ENCODE measurements at regions of chr6 and their contacts with region 1.

Region 1: DNA sequence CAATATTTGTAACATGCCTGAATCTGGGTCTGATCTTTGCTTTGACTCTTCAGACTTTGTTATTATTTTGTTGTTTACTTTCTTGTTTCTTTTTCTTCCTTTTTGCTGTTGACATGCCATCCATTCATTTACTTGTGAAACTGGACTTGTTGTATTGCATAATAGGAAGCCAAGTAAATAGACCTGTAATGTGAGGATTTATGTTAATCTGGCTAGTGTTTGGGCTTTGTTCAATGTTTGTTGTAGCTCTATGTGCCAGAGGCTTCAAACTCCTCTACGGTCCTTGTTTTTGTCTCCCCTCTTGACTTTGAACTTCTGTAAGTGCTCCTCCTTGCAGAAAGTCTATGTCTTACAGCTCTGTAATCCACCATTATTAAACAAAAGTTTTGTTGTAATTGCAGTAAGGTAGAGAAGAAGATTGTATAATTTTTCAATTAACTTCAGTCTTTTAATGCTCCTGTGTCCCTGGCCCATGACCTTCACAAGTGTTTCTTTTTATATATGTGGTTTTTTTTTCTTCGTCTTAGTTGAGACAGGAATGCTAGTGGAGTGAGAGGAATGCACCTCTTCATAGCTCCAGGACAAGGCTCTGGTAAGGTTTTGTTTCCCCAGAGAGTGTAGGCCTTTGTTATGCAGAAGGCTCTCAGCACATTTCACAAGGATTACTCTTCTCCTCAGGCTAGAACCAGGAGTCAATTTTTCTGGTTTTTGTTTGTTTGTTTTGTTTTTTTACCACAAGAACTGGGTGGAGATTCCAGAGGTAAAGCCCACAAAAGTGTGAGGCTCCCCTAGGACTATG is 1061.8 kb upstream of the CITED2 start:
- DNase-seq: no peak
- ATAC-seq: no peak
- H3K4me3 ChIP-seq: no peak overlapping the region
- H3K27ac ChIP-seq: no peak overlapping the region
- H3K4me1 ChIP-seq: no peaks in the 10 kb centered on the region
- H3K27me3 ChIP-seq: no peaks in the 10 kb centered on the region
- CTCF ChIP-seq: no peak

Region 2: DNA sequence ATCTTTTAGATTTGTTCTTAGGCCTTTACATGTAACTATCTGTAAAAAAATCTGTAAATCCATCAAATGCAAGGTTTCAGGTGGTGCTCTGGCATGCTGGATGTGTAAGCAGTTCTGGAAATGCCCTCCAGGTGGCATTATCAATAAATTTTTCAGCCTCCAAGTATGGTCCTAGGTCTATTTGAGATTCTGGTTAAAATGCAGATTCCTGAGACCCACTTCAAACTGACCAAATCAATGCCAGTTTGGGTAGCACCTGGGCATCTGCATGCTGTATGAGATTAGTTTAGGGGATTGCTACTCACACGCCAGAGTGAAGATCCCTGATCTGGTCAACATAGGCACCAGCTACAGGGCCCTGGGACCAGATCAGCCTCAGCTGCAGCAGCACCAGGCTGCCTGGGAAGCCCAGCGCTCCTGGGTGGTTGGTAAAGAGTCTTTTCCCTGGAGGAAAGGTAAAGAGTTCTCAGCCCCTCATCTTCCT is 554.4 kb before region 1 on chr6:
- intact Hi-C with region 1: loop called in 1 of 3 experiments (anchors 10 kb)
- DNase-seq: peak in 1 of 6 donors; percentile 45
- ATAC-seq: peak; percentile 83 to 89 (median 86)
- H3K4me3 ChIP-seq: no peak overlapping the region
- H3K27ac ChIP-seq: no peak overlapping the region
- H3K4me1 ChIP-seq: peaks cover 0 to 11% (median 4%) of the 10 kb centered on the region in 3 donors
- H3K27me3 ChIP-seq: no peaks in the 10 kb centered on the region
- CTCF ChIP-seq: peak; percentile 20 to 61 (median 50)

Region 3: DNA sequence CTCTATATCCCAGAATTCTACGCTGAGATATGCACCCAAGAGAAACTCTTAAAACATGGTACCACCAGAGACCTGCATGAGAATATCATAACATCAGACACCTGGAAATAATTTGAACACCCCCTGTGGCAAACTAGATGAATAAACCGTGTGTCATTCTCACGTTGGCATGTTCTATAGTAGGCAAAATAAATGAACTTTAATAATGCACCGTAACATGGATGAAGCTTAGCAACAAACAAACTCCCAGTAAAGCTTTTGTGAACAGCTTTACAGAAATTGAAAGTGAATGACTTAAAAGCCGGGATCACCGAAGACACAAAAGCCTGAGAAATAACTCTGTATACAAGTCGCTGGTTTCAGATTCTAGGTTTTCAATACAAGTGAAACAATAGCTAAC is 105.1 kb after region 1 on chr6:
- intact Hi-C with region 1: no loop called
- DNase-seq: no peak
- ATAC-seq: no peak
- H3K4me3 ChIP-seq: no peak overlapping the region
- H3K27ac ChIP-seq: no peak overlapping the region
- H3K4me1 ChIP-seq: no peaks in the 10 kb centered on the region
- H3K27me3 ChIP-seq: no peaks in the 10 kb centered on the region
- CTCF ChIP-seq: no peak

Measured in pancreas (tissue), 10 donors.